ENCODE measurements at regions of chr11 and their contacts with region 1.

Region 1: DNA sequence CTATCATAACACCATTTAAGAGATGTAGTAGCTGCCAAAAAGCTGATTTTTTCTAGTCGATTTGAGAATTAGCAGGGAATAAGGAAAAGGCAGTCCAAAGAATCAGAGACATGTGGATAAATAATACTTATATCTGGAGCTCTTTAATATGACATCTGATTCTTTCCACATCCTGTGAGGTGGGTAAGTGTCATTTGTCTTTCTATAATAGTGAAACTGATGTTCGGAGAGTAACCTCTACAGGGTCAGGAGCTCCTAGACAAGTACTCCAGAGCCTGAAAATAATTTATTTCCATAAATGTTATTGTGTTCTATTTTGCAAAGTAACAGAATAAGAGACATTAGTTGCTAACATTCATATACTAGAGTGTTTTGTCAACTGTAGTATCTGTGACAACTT is 367.6 kb downstream of the DYNC2H1 start:
- DNase-seq: no peak
- H3K4me3 ChIP-seq: no peak overlapping the region
- H3K27ac ChIP-seq: no peak overlapping the region
- H3K4me1 ChIP-seq: no peaks in the 10 kb centered on the region
- H3K27me3 ChIP-seq: no peaks in the 10 kb centered on the region
- CTCF ChIP-seq: no peak

Region 2: DNA sequence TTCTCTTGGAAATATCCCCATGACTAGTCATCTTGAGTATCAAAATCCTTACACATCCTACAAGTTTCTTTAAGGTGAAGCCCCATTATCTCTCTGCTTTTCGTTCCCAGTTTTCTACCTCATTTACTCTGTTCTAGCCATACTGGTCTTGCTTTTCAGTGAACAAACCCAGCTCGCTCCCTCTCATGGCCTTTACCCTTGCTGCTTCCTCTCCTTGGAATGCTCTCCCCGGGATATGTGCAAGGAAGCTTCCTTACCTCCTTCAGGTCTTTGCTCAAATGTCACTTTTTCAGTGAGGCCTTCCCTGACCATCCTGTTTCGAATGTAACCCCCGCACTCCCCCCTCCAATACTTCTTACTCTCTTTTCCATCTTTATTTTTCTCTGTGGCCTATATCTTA is 35.9 kb before region 1 on chr11:
- CTCF ChIA-PET with region 1: no interaction called
- dilution Hi-C with region 1: loop called (anchors 5 kb)
- in situ Hi-C with region 1: no loop called
- intact Hi-C with region 1: no loop called
- DNase-seq: no peak
- H3K4me3 ChIP-seq: no peak overlapping the region
- H3K27ac ChIP-seq: no peak overlapping the region
- H3K4me1 ChIP-seq: no peaks in the 10 kb centered on the region
- H3K27me3 ChIP-seq: no peaks in the 10 kb centered on the region
- CTCF ChIP-seq: no peak

Region 3: GRCh38 chr11:103515283-103515682 is 38.4 kb after region 1 on chr11:
- CTCF ChIA-PET with region 1: no interaction called
- dilution Hi-C with region 1: no loop called
- in situ Hi-C with region 1: no loop called
- intact Hi-C with region 1: no loop called
- DNase-seq: no peak
- H3K4me3 ChIP-seq: no peak overlapping the region
- H3K27ac ChIP-seq: no peak overlapping the region
- H3K4me1 ChIP-seq: peaks cover 3% of the 10 kb centered on the region
- H3K27me3 ChIP-seq: no peaks in the 10 kb centered on the region
- CTCF ChIP-seq: no peak